ENCODE measurements at regions of chr10 and their contacts with region 1.

Region 1: DNA sequence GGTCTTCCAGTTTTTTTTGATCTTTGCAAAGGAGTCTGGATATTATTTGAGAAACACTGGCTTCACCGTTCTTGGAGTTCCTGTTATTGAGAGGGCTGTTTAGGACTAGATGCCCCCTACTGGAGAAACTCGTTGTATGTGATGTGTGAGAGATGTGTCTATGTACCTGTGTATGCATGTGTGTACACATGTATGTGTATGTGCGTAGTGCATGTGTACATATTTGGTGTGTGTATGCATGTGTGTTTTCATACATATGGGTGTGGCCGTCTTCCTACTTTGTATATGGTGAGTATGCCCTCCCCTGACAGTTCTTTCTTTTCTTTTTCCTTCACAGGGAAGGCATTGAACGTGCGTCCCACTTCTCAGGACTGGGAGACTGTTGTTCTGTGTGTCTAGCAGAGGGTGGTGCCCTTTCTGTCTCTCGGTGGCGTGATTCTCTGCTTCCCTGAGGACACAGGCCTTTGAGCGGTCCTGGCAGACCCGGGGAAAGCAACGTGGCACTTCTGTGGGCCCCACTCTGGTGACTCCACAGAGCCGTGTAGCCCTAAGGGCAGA is 3.0 kb upstream of the CALHM3 start:
- DNase-seq: no peak
- ATAC-seq: peak; percentile 69 to 70
- H3K4me3 ChIP-seq: no peak overlapping the region
- H3K27ac ChIP-seq: no peak overlapping the region
- H3K4me1 ChIP-seq: no peaks in the 10 kb centered on the region
- H3K27me3 ChIP-seq: no peaks in the 10 kb centered on the region

Region 2: GRCh38 chr10:103416436-103417147 is 65.5 kb before region 1 on chr10:
- intact Hi-C with region 1: loop called (anchors 1 to 5 kb)
- DNase-seq: peak in 2 of 3 donors; percentile 53 to 81
- ATAC-seq: peak; percentile 41 to 51
- H3K4me3 ChIP-seq: no peak overlapping the region
- H3K27ac ChIP-seq: no peak overlapping the region
- H3K4me1 ChIP-seq: no peaks in the 10 kb centered on the region
- H3K27me3 ChIP-seq: no peaks in the 10 kb centered on the region

Region 3: GRCh38 chr10:103442031-103442461 is 40.0 kb before region 1 on chr10:
- intact Hi-C with region 1: no loop called
- DNase-seq: peak; percentile 62 to 80 (median 80)
- ATAC-seq: peak; percentile 9
- H3K4me3 ChIP-seq: no peak overlapping the region
- H3K27ac ChIP-seq: peak overlapping the region; percentile 15
- H3K4me1 ChIP-seq: peaks cover 19% of the 10 kb centered on the region
- H3K27me3 ChIP-seq: no peaks in the 10 kb centered on the region

Measured in right cardiac atrium (tissue), 5 donors.